Activated CD8-positive, alpha-beta T cell treated with anti-CD3 and anti-CD28 coated beads for 36 hours (primary cell): ENCODE measurements at regions of chr7 and their contacts with region 1.

Region 1: GRCh38 chr7:36670585-36671431 is 53.5 kb downstream of the AOAH start:
- DNase-seq: peak; percentile 78
- ATAC-seq: peak; percentile 78
- H3K4me3 Mint-ChIP-seq: no peak overlapping the region
- H3K27ac Mint-ChIP-seq: peak overlapping the region; percentile 82
- H3K4me1 Mint-ChIP-seq: peaks cover 67% of the 10 kb centered on the region
- H3K27me3 Mint-ChIP-seq: no peaks in the 10 kb centered on the region
- CTCF ChIP-seq: peak; percentile 87

Region 2: DNA sequence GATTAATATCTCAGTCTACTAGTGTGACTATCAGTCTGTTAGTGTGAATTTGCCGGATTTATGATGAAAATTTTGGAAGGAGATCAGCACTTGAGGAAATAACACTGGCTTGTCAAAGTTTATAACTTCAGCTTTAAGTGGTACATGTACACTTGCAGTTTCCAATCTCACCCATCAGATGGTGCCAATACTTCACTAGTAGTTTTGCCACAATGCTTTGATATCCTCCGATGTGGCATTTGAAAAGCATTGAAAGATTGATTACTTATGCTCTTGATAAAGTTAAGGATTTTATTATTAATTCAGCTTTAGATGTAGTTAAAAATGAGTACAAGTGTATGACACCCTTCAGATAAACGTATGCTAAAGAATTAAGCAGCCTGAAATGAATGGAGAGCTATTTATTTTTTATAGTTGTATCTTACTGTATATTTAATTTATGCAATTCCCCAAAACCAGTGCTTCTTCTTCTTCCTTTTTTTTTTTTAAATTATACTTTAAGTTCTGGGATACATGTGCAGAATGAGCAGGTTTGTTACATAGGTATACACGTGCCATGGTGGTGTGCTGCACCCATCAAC is 183.0 kb before region 1 on chr7:
- CTCF ChIA-PET with region 1: interaction called, 30 read pairs
- POLR2A ChIA-PET with region 1: no interaction called
- intact Hi-C with region 1: loop called (anchors 5 kb)
- DNase-seq: peak; percentile 46
- ATAC-seq: peak; percentile 79
- H3K4me3 Mint-ChIP-seq: no peak overlapping the region
- H3K27ac Mint-ChIP-seq: no peak overlapping the region
- H3K4me1 Mint-ChIP-seq: no peaks in the 10 kb centered on the region
- H3K27me3 Mint-ChIP-seq: no peaks in the 10 kb centered on the region
- CTCF ChIP-seq: peak; percentile 82

Region 3: DNA sequence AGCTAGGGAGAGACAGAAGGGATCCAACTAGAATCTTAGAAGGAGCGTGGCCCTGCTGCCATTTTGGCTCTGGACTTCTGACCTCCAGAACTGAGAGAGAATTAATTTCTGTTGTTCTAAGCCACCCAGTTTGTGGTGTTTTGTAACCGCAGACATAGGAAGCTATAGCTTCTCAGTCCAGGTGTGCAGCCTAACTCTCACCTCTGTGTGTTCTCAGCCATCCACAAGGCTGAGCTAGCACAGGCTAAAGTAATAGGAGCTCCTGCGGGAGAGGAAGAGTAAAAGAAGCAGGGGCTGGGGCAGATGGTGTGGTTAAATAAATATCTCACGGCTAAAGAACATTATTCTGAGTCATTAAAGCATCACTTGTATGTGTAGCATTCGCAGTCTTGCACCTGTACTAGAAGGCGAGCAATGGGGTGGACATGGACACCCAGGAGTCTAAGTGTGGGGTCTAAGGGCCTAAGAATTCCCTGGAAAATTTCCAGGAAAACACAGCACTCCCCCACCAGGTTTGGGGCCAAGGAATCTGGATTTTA is 40.6 kb before region 1 on chr7:
- CTCF ChIA-PET with region 1: interaction called, 10 read pairs
- POLR2A ChIA-PET with region 1: no interaction called
- intact Hi-C with region 1: no loop called
- DNase-seq: no peak
- ATAC-seq: no peak
- H3K4me3 Mint-ChIP-seq: no peak overlapping the region
- H3K27ac Mint-ChIP-seq: no peak overlapping the region
- H3K4me1 Mint-ChIP-seq: peaks cover 18% of the 10 kb centered on the region
- H3K27me3 Mint-ChIP-seq: no peaks in the 10 kb centered on the region
- CTCF ChIP-seq: no peak

Region 4: DNA sequence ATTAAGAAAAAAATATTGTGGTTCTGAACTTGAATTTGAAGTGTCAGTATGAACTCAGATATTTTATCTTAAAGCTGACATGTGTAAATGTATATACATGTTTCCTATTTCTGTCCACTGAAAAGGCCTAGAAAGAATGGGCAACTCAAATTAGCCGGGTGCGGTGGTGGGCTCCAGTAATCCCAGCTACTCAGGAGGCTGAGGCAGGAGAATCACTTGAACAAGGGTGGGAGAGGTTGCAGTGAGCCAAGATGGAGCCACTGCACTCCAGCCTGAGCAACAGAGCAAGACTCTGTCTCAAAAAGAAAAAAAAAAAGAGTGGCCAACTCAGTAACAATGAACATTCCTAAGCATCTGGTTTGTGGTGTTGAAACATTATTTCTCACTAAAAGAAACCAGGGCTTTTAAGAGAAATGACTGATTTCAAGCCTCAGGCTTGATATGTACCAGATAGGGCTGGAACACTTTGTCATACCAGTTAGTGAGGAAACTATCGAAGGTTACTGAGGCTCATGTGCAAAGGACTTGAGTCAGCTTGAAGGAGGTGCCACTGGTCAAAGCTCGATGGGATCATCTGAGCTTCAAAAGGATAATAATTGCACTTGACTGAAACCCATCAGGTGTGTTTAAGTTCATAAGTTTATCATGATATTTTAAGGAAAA is 13.0 kb after region 1 on chr7:
- CTCF ChIA-PET with region 1: interaction called, 53 read pairs
- POLR2A ChIA-PET with region 1: interaction called, 4 read pairs
- intact Hi-C with region 1: no loop called
- DNase-seq: peak; percentile 33
- ATAC-seq: peak; percentile 75
- H3K4me3 Mint-ChIP-seq: no peak overlapping the region
- H3K27ac Mint-ChIP-seq: peak overlapping the region; percentile 90
- H3K4me1 Mint-ChIP-seq: peaks cover 76% of the 10 kb centered on the region
- H3K27me3 Mint-ChIP-seq: no peaks in the 10 kb centered on the region
- CTCF ChIP-seq: no peak

Region 5: DNA sequence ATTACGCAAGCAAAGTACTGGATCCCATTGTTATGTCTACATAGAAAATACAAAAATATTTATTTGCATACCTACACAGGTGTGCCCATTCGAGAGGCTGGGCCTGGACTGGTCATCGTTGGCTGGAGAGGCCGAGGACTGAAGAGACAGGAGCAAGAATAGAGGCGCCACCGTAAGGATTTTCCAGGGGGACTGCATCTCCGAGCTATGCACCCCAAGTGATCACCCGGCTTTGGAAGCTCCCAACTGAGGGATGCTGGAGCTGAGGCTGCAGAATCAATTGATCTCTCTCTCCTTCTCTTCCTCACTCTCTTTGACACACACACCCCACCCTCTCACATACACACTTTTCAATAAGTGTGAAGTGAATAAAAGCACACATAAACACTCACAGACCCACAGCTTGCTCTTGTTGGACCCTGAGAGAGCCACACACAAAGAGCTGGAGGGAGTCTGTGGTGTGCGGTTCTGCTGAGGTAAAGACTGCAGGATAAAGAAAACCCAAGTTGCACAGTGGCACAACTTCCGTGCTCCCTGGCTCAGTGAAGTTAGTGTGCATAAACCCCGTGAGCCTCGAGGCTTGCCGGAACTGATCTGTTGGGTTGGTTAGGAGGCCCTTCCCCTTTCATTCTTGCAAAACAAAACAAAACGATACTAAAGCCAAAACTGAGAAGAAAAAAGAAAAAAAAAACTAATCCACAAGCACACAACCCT is 53.3 kb after region 1 on chr7 and contains the start of gene AOAH:
- CTCF ChIA-PET with region 1: interaction called, 14 read pairs
- POLR2A ChIA-PET with region 1: interaction called, 5 read pairs
- intact Hi-C with region 1: loop called (anchors 5 kb)
- DNase-seq: peak; percentile 92
- ATAC-seq: peak; percentile 84
- H3K4me3 Mint-ChIP-seq: peak within 1 kb of the TSS; percentile 78
- H3K27ac Mint-ChIP-seq: peak within 1 kb of the TSS; percentile 88
- H3K4me1 Mint-ChIP-seq: peaks cover 78% of the 10 kb centered on the region
- H3K27me3 Mint-ChIP-seq: no peaks in the 10 kb centered on the region
- CTCF ChIP-seq: no peak
- total RNA-seq, gene AOAH: 10.4 to 17.1 TPM